Heart left ventricle (tissue), 16 donors: ENCODE measurements at regions of chr1 and their contacts with region 1.

Region 1: GRCh38 chr1:206583707-206584648 is 28.3 kb downstream of the EIF2D start:
- DNase-seq: peak; percentile 70 to 84 (median 76)
- ATAC-seq: peak in 3 of 4 donors; percentile 40 to 55 (median 53)
- H3K4me3 ChIP-seq: no peak overlapping the region
- H3K27ac ChIP-seq: peak overlapping the region in 2 of 12 donors; percentile 30 to 80
- H3K4me1 ChIP-seq: peaks cover 0 to 55% (median 14%) of the 10 kb centered on the region in 12 donors
- H3K27me3 ChIP-seq: no peaks in the 10 kb centered on the region
- CTCF ChIP-seq: peak; percentile 83 to 97 (median 91)
- POLR2A ChIP-seq: no peak

Region 2: GRCh38 chr1:206479183-206480125 is 104.5 kb before region 1 on chr1:
- intact Hi-C with region 1: loop called in 1 of 10 experiments (anchors 5 kb)
- DNase-seq: peak in 4 of 5 donors; percentile 55 to 74 (median 64)
- ATAC-seq: peak in 3 of 4 donors; percentile 43 to 69 (median 52)
- H3K4me3 ChIP-seq: no peak overlapping the region
- H3K27ac ChIP-seq: no peak overlapping the region
- H3K4me1 ChIP-seq: no peaks in the 10 kb centered on the region
- H3K27me3 ChIP-seq: no peaks in the 10 kb centered on the region
- CTCF ChIP-seq: peak; percentile 62 to 85 (median 76)
- POLR2A ChIP-seq: no peak

Region 3: DNA sequence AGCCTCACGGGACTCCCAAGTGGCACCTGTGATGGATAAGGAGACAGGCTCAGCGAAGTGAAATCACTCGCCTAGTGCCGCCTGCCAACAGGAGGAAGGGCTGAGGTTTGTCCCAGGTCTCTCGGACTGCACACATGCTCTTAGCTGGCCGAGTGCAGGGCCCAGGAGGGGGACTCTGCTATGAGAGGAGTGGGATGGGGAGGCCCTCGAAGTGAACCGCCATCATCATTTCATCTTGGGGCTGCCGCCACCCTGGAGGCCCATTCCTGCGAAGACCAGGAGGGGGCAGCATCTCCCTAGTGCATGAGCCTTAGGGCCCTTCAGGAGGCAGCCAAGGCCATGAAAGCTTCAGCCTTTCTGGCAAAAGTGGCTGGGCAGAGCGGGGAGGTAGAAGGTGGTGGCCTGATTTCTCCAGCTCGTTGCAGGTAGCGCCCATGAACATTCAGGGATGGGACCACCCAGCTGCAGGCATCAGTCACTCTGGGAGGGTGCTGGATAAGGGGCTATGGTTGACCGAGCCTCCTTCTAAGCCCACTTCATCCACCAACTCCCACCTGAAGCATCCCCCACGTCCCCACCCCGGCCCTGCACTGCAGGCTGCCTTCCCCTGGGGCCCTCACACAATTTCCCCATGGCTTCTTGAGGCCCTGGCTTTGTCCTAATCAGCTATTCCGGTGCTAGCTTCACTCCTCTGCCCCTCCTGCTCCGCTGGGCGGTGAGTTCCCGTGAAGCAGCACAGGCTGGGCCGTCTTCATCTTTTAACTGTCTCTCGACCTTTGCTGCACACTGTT is 93.8 kb before region 1 on chr1:
- intact Hi-C with region 1: loop called (anchors 1 to 2 kb)
- DNase-seq: peak; percentile 68 to 84 (median 78)
- ATAC-seq: peak; percentile 56 to 90 (median 86)
- H3K4me3 ChIP-seq: no peak overlapping the region
- H3K27ac ChIP-seq: no peak overlapping the region
- H3K4me1 ChIP-seq: peaks cover 0 to 36% (median 11%) of the 10 kb centered on the region in 12 donors
- H3K27me3 ChIP-seq: no peaks in the 10 kb centered on the region
- CTCF ChIP-seq: peak; percentile 88 to 98 (median 94)
- POLR2A ChIP-seq: no peak

Region 4: GRCh38 chr1:206631085-206631509 is 47.1 kb after region 1 on chr1:
- intact Hi-C with region 1: no loop called
- DNase-seq: peak in 4 of 5 donors; percentile 83 to 85 (median 84)
- ATAC-seq: peak; percentile 39 to 62 (median 50)
- H3K4me3 ChIP-seq: no peak overlapping the region
- H3K27ac ChIP-seq: peak overlapping the region in 2 of 12 donors; percentile 26 to 46
- H3K4me1 ChIP-seq: peaks cover 0 to 30% (median 13%) of the 10 kb centered on the region in 12 donors
- H3K27me3 ChIP-seq: no peaks in the 10 kb centered on the region
- CTCF ChIP-seq: peak; percentile 35 to 79 (median 66)
- POLR2A ChIP-seq: no peak